ENCODE measurements at regions of chr4 and their contacts with region 1.

Region 1: GRCh38 chr4:47562297-47562696 is 77.2 kb downstream of the ATP10D start:
- DNase-seq: no peak
- ATAC-seq: no peak
- H3K4me3 ChIP-seq: no peak overlapping the region
- H3K27ac ChIP-seq: no peak overlapping the region
- H3K4me1 ChIP-seq: peaks cover 5% of the 10 kb centered on the region; the same call in 1 of the 2 replicates
- H3K27me3 ChIP-seq: no peaks in the 10 kb centered on the region; a peak in 1 of 4 replicates
- CTCF ChIP-seq: no peak
- EP300 ChIP-seq: no peak
- POLR2A ChIP-seq: no peak
- RAD21 ChIP-seq: no peak

Region 2: DNA sequence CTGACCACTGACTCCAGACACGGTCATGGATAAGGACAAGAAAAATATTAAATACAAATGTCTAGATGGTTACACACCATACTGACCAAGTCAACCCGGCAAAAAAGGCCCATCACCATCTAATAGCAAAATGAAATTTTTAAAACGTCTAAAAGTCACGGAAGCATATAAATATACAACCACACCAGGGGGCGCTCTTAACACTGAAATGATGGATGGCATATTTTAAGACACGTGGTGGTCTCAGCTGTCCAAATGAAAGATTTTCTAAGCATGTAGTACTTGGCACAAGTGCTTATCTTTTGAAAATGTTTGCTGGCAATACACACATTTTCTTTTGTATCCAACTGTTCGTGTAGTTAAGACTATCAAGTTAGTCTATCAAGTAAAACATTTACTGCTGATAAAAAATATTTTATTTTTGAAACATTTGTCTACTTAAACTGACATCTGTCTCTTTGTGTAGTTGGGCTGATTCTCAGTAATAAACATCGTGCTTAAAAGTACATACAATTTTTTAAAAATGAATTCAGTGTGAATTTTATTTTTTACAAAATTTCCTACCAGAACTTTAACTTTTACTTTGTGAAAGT is 717.9 kb before region 1 on chr4:
- CTCF ChIA-PET with region 1: no interaction called
- POLR2A ChIA-PET with region 1: no interaction called
- RAD21 ChIA-PET with region 1: no interaction called
- SMC1A ChIA-PET with region 1: no interaction called
- in situ Hi-C with region 1: no loop called
- intact Hi-C with region 1: no loop called
- DNase-seq: peak; percentile 4
- ATAC-seq: peak; percentile 81
- H3K4me3 ChIP-seq: no peak overlapping the region
- H3K27ac ChIP-seq: no peak overlapping the region
- H3K4me1 ChIP-seq: no peaks in the 10 kb centered on the region
- H3K27me3 ChIP-seq: no peaks in the 10 kb centered on the region
- CTCF ChIP-seq: peak; percentile 57 to 68 (median 66)
- EP300 ChIP-seq: no peak
- POLR2A ChIP-seq: no peak
- RAD21 ChIP-seq: peak; percentile 74

Region 3: GRCh38 chr4:47349326-47349725 is 213.0 kb before region 1 on chr4:
- CTCF ChIA-PET with region 1: no interaction called
- POLR2A ChIA-PET with region 1: no interaction called
- RAD21 ChIA-PET with region 1: no interaction called
- SMC1A ChIA-PET with region 1: no interaction called
- in situ Hi-C with region 1: no loop called
- intact Hi-C with region 1: no loop called
- DNase-seq: no peak
- ATAC-seq: no peak
- H3K4me3 ChIP-seq: no peak overlapping the region
- H3K27ac ChIP-seq: no peak overlapping the region
- H3K4me1 ChIP-seq: no peaks in the 10 kb centered on the region
- H3K27me3 ChIP-seq: no peaks in the 10 kb centered on the region
- CTCF ChIP-seq: no peak
- EP300 ChIP-seq: no peak
- POLR2A ChIP-seq: no peak
- RAD21 ChIP-seq: no peak

Region 4: GRCh38 chr4:47383829-47384427 is 178.4 kb before region 1 on chr4:
- CTCF ChIA-PET with region 1: interaction called, 3 read pairs
- POLR2A ChIA-PET with region 1: no interaction called
- RAD21 ChIA-PET with region 1: no interaction called
- SMC1A ChIA-PET with region 1: no interaction called
- in situ Hi-C with region 1: no loop called
- intact Hi-C with region 1: loop called (anchors 5 kb)
- DNase-seq: no peak
- ATAC-seq: peak; percentile 44; the same call in 2 of the 3 replicates
- H3K4me3 ChIP-seq: no peak overlapping the region
- H3K27ac ChIP-seq: no peak overlapping the region
- H3K4me1 ChIP-seq: no peaks in the 10 kb centered on the region
- H3K27me3 ChIP-seq: no peaks in the 10 kb centered on the region
- CTCF ChIP-seq: peak; percentile 19 to 59 (median 37); a peak in 4 of 6 replicates
- EP300 ChIP-seq: no peak
- POLR2A ChIP-seq: no peak
- RAD21 ChIP-seq: peak; percentile 83

Region 5: GRCh38 chr4:47463235-47463956 is 98.9 kb before region 1 on chr4 and contains the start of gene COMMD8:
- CTCF ChIA-PET with region 1: interaction called, 18 read pairs
- POLR2A ChIA-PET with region 1: interaction called, 3 read pairs
- RAD21 ChIA-PET with region 1: interaction called, 14 read pairs
- SMC1A ChIA-PET with region 1: interaction called, 4 read pairs
- in situ Hi-C with region 1: no loop called
- intact Hi-C with region 1: loop called (anchors 2 kb)
- DNase-seq: peak; percentile 91
- ATAC-seq: peak; percentile 87
- H3K4me3 ChIP-seq: peak within 1 kb of the TSS; percentile 92
- H3K27ac ChIP-seq: peak within 1 kb of the TSS; percentile 79
- H3K4me1 ChIP-seq: peaks cover 22% of the 10 kb centered on the region
- H3K27me3 ChIP-seq: no peaks in the 10 kb centered on the region
- CTCF ChIP-seq: peak; percentile 22 to 41 (median 34); a peak in 5 of 6 replicates
- EP300 ChIP-seq: peak in 1 of 2 experiments; percentile 25; a peak in 1 of 4 replicates
- POLR2A ChIP-seq: peak; percentile 96
- RAD21 ChIP-seq: peak; percentile 1; the same call in 1 of the 2 replicates
- polyA plus RNA-seq, gene COMMD8: 126 to 152 TPM

Region 6: GRCh38 chr4:47543331-47543730 is 19.0 kb before region 1 on chr4:
- CTCF ChIA-PET with region 1: interaction called, 4 read pairs
- POLR2A ChIA-PET with region 1: no interaction called
- RAD21 ChIA-PET with region 1: interaction called, 3 read pairs
- SMC1A ChIA-PET with region 1: interaction called, 10 read pairs
- in situ Hi-C with region 1: no loop called
- intact Hi-C with region 1: no loop called
- DNase-seq: no peak
- ATAC-seq: no peak
- H3K4me3 ChIP-seq: no peak overlapping the region
- H3K27ac ChIP-seq: no peak overlapping the region
- H3K4me1 ChIP-seq: no peaks in the 10 kb centered on the region
- H3K27me3 ChIP-seq: no peaks in the 10 kb centered on the region
- CTCF ChIP-seq: no peak
- EP300 ChIP-seq: no peak
- POLR2A ChIP-seq: no peak
- RAD21 ChIP-seq: no peak